Endothelial cell of umbilical vein (primary cell): ENCODE measurements at regions of chr4 and their contacts with region 1.

Region 1: GRCh38 chr4:10461091-10461849 is 4.0 kb upstream of the ZNF518B start:
- DNase-seq: peak; percentile 67
- H3K4me3 ChIP-seq: peak overlapping the region in 2 of 3 experiments; percentile 21 to 27
- H3K27ac ChIP-seq: no peak overlapping the region
- H3K4me1 ChIP-seq: peaks cover 17% of the 10 kb centered on the region
- H3K27me3 ChIP-seq: peaks cover 13 to 20% of the 10 kb centered on the region in 2 experiments
- CTCF ChIP-seq: peak; percentile 92 to 93
- POLR2A ChIP-seq: no peak

Region 2: DNA sequence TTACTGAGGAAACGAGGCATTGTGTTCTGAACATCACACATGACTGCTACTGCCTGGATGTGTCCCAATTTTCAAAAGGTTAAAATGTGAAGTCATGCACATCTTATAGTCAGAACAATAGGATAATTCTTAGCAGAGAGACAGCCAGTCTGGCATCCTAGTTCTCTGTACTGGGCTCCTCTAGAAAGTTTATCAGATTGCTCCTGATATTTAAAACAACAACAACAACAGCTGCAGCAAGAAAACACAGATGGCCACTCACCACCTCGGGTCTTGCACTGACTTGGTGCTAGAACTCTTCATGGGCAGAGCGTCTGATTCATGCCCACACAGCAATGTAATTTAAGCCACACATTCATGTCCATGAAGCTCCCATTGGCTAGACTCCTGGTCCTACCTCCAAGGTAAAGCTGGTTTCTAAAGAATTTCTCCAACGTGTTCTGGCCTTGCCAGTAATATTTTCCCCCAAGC is 406.7 kb before region 1 on chr4:
- CTCF ChIA-PET with region 1: no interaction called
- POLR2A ChIA-PET with region 1: no interaction called
- dilution Hi-C with region 1: no loop called
- intact Hi-C with region 1: no loop called
- DNase-seq: peak; percentile 74
- H3K4me3 ChIP-seq: no peak overlapping the region
- H3K27ac ChIP-seq: no peak overlapping the region
- H3K4me1 ChIP-seq: peaks cover 6% of the 10 kb centered on the region
- H3K27me3 ChIP-seq: no peaks in the 10 kb centered on the region
- CTCF ChIP-seq: no peak
- POLR2A ChIP-seq: no peak

Region 3: DNA sequence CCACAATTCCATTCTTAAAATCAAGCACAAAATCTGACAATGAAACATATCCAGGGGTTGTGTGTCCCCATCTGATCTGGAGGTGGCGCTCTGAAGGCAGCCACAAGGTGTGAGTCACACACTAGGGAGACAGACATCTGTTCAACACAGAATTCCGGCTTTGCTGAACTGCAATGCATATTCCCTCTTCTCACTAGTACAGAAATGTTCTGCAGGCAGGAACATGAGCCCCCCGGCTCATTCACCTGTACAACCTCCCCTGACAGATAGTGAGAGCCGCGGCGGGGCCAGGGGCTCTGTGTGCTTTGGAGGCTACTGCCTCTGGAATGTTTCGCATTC is 386.5 kb before region 1 on chr4:
- CTCF ChIA-PET with region 1: no interaction called
- POLR2A ChIA-PET with region 1: no interaction called
- dilution Hi-C with region 1: no loop called
- intact Hi-C with region 1: loop called (anchors 5 kb)
- DNase-seq: peak; percentile 53
- H3K4me3 ChIP-seq: no peak overlapping the region
- H3K27ac ChIP-seq: no peak overlapping the region
- H3K4me1 ChIP-seq: peaks cover 23% of the 10 kb centered on the region
- H3K27me3 ChIP-seq: no peaks in the 10 kb centered on the region
- CTCF ChIP-seq: peak; percentile 53 to 61
- POLR2A ChIP-seq: peak; percentile 20

Region 4: GRCh38 chr4:10164877-10165283 is 296.4 kb before region 1 on chr4:
- CTCF ChIA-PET with region 1: interaction called, 17 read pairs
- POLR2A ChIA-PET with region 1: no interaction called
- dilution Hi-C with region 1: no loop called
- intact Hi-C with region 1: no loop called
- DNase-seq: peak; percentile 73
- H3K4me3 ChIP-seq: no peak overlapping the region
- H3K27ac ChIP-seq: no peak overlapping the region
- H3K4me1 ChIP-seq: no peaks in the 10 kb centered on the region
- H3K27me3 ChIP-seq: no peaks in the 10 kb centered on the region
- CTCF ChIP-seq: peak; percentile 65 to 74
- POLR2A ChIP-seq: no peak

Region 5: GRCh38 chr4:10448991-10449390 is 12.3 kb before region 1 on chr4:
- CTCF ChIA-PET with region 1: interaction called, 11 read pairs
- POLR2A ChIA-PET with region 1: no interaction called
- dilution Hi-C with region 1: no loop called
- intact Hi-C with region 1: no loop called
- DNase-seq: no peak
- H3K4me3 ChIP-seq: no peak overlapping the region
- H3K27ac ChIP-seq: no peak overlapping the region
- H3K4me1 ChIP-seq: no peaks in the 10 kb centered on the region
- H3K27me3 ChIP-seq: no peaks in the 10 kb centered on the region
- CTCF ChIP-seq: no peak
- POLR2A ChIP-seq: no peak

Region 6: DNA sequence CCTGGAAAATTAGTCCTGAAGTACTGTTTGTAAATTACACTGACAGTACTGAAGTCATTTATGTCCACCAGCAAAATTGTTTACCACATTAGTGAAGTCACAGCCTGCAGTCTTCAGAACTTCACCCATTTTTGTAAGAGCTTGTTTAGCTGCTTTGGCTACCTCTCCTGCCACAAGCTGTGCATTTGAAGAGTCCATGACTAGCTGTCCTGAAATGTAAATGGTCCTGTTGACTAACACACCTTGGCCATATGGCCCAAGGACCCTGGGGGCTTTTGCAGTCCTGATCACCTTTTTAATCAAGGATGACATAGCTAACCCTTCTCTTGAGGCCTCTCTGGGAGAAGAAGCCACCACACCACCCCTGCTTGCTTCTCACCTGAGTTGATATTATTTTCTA is 17.4 kb after region 1 on chr4:
- CTCF ChIA-PET with region 1: interaction called, 14 read pairs
- POLR2A ChIA-PET with region 1: interaction called, 4 read pairs
- dilution Hi-C with region 1: no loop called
- intact Hi-C with region 1: no loop called
- DNase-seq: no peak
- H3K4me3 ChIP-seq: no peak overlapping the region
- H3K27ac ChIP-seq: no peak overlapping the region
- H3K4me1 ChIP-seq: no peaks in the 10 kb centered on the region
- H3K27me3 ChIP-seq: peaks cover 0 to 2% of the 10 kb centered on the region in 2 experiments
- CTCF ChIP-seq: no peak
- POLR2A ChIP-seq: no peak

Region 7: GRCh38 chr4:10535912-10536311 is 74.6 kb after region 1 on chr4:
- CTCF ChIA-PET with region 1: interaction called, 69 read pairs
- POLR2A ChIA-PET with region 1: no interaction called
- dilution Hi-C with region 1: no loop called
- intact Hi-C with region 1: loop called (anchors 1 kb)
- DNase-seq: no peak
- H3K4me3 ChIP-seq: no peak overlapping the region
- H3K27ac ChIP-seq: no peak overlapping the region
- H3K4me1 ChIP-seq: peaks cover 3% of the 10 kb centered on the region
- H3K27me3 ChIP-seq: peaks cover 0 to 2% of the 10 kb centered on the region in 2 experiments
- CTCF ChIP-seq: no peak
- POLR2A ChIP-seq: no peak

Region 8: DNA sequence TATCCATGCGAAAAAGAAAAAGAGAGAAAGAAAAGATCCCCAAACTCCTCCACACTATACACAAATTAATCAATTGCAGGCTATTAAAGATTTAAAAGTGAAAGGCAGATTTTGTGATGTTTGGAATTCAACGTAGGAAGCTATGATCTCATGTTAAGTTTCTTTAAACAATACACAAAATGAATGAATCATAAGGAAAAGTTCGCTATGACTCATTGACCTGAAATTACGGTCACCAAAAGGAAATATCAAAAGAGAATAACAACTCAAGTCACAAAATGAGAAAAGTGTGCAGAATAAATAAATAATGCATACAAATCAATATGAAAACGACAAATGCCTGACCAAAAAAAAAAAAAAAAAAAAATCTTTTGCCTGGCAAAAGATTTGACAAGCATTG is 194.7 kb after region 1 on chr4:
- CTCF ChIA-PET with region 1: no interaction called
- POLR2A ChIA-PET with region 1: no interaction called
- dilution Hi-C with region 1: no loop called
- intact Hi-C with region 1: loop called (anchors 10 kb)
- DNase-seq: peak; percentile 92
- H3K4me3 ChIP-seq: peak overlapping the region in 1 of 3 experiments; percentile 27
- H3K27ac ChIP-seq: peak overlapping the region; percentile 76
- H3K4me1 ChIP-seq: peaks cover 22% of the 10 kb centered on the region
- H3K27me3 ChIP-seq: no peaks in the 10 kb centered on the region
- CTCF ChIP-seq: no peak
- POLR2A ChIP-seq: no peak